Panc1 (cell line): ENCODE measurements at regions of chr7 and their contacts with region 1.

Region 1: DNA sequence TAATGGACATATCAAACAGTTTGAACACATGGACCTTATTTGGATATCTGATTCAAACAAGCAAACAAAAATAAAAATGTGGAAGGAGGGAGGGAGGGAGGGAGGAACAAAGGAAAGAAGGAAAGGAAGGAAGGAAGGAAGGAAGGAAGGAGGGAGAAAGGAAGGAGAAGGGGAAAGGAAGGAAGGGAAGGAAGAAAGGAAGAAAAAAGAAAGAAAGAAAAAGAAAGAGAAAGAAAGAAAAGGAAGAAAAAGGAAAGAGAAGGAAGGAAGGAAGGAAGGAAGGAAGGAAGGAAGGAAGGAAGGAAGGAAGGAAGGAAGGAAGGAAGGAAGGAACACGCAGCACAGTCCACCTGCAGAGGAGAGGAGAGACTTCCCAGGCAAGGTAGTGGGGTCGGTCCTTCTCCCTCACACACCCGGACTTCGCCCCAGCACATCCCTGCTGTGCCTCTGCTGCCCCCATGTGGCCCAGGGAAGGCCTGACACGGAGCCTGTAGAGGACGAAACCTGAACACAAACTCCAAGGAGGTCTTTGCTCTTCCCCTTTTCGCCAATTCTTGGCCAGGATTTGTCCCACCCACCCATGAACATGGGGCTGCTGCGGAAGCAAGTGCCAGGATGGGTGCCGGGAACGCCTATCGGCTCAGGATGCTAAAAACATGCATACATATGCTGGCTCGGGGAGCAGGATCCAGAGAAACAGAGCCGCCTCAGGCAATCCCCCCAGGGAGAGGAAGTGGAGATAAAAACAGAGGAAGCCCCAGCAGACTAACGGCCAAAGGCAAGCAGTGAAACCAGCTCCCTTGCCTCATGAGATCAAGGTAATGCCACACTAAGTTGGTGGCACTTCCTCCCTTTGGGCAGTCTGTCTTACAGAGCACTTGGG is 52.3 kb upstream of the DGKI start:
- DNase-seq: peak; percentile 59
- ATAC-seq: peak; percentile 98
- H3K4me3 ChIP-seq: peak overlapping the region in 1 of 2 experiments; percentile 15; a peak in 1 of 4 replicates
- H3K27ac ChIP-seq: no peak overlapping the region
- H3K4me1 ChIP-seq: peaks cover 5% of the 10 kb centered on the region; the same call in 1 of the 2 replicates
- H3K27me3 ChIP-seq: no peaks in the 10 kb centered on the region
- CTCF ChIP-seq: peak; percentile 95

Region 2: DNA sequence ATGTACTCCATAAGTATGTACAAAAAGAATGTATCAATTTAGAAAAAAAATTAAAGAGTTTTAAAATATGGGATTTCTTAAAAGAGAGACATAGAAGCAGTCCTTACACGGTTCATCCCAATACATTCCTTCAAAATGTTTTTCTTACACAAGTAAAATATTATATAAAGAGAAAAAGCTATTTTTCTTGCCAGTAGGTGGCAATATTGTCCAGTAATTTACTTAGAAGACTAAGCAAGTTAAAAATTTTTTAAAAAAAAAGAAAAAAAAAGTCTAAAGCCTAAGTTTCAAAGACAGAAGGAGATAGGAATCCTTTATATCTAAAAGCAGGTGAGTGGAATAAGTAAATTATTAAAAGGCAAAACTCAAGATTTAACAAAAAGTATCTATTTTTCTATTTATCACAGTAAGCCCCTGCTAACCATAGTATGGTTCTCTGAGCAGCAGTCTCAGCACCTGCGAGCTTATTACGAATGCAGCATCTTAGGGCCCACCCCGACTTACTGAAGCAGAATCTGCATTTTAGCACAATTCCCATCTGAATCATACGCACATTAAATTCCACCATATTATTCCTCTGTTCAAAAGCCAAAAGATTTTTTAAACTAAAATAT is 292.9 kb before region 1 on chr7:
- CTCF ChIA-PET with region 1: no interaction called
- POLR2A ChIA-PET with region 1: no interaction called
- in situ Hi-C with region 1: no loop called
- intact Hi-C with region 1: loop called (anchors 2 kb)
- DNase-seq: peak; percentile 41
- ATAC-seq: no peak
- H3K4me3 ChIP-seq: no peak overlapping the region
- H3K27ac ChIP-seq: no peak overlapping the region
- H3K4me1 ChIP-seq: no peaks in the 10 kb centered on the region
- H3K27me3 ChIP-seq: peaks cover 30% of the 10 kb centered on the region
- CTCF ChIP-seq: peak; percentile 36; the same call in 1 of the 2 replicates

Region 3: GRCh38 chr7:137656227-137656849 is 242.7 kb before region 1 on chr7:
- CTCF ChIA-PET with region 1: interaction called, 3 read pairs
- POLR2A ChIA-PET with region 1: interaction called, 4 read pairs
- in situ Hi-C with region 1: no loop called
- intact Hi-C with region 1: loop called (anchors 1 kb)
- DNase-seq: no peak
- ATAC-seq: peak; percentile 85
- H3K4me3 ChIP-seq: no peak overlapping the region
- H3K27ac ChIP-seq: no peak overlapping the region
- H3K4me1 ChIP-seq: no peaks in the 10 kb centered on the region
- H3K27me3 ChIP-seq: peaks cover 12% of the 10 kb centered on the region
- CTCF ChIP-seq: peak; percentile 91

Region 4: DNA sequence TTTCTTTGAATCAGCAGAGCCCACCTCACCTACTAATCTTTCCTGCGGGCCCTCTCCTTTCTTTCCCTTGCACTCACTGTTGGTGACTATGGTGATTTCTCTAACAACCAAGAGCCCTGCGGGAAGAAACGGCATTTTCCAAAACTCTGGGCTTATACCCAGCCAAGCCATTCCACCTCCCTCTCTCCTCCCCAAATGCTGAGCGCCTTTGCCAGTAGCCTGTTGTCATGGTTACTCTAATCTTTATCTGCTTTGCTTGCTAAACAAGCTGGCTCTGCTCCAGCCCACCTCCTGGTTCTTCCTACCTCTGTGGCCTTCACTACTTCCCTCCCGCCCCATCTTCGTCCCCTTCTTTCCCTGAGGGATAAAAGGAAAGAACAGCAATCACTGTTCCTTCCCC is 139.0 kb before region 1 on chr7:
- CTCF ChIA-PET with region 1: interaction called, 16 read pairs
- POLR2A ChIA-PET with region 1: no interaction called
- in situ Hi-C with region 1: no loop called
- intact Hi-C with region 1: no loop called
- DNase-seq: no peak
- ATAC-seq: no peak
- H3K4me3 ChIP-seq: no peak overlapping the region
- H3K27ac ChIP-seq: no peak overlapping the region
- H3K4me1 ChIP-seq: no peaks in the 10 kb centered on the region
- H3K27me3 ChIP-seq: 0 out of 2 replicates have a peak, but pooled peaks cover 2% of the 10 kb centered on the region
- CTCF ChIP-seq: no peak

Region 5: DNA sequence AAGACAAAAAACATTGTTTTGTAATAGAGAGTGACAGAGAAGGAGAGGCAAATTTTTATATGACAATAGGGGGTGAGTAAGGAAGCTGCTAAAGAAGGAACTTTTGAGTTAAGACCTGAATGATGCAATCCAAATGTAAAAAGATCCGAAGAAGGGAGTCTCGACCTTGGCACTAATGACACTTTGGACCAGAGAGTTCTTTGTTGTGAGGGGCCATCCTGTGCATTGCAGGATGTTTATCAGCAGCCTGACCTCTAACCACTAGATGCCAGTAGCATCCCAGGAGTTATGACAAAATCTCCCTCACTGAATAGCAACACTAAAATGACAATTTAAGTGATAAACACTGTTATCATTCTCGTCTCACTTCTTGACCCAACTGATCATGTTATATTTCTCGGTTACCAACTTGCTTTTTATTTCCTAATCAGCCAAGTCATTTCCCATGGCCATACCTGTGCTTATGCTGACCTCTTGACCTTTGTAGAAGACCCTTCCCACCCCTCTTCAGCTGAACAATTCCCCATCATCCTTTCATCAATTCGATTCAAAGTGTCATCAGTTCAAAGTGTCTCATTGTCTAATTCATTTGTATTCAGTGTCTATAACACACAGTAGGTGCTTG is 82.3 kb before region 1 on chr7:
- CTCF ChIA-PET with region 1: no interaction called
- POLR2A ChIA-PET with region 1: no interaction called
- in situ Hi-C with region 1: no loop called
- intact Hi-C with region 1: no loop called
- DNase-seq: no peak
- ATAC-seq: no peak
- H3K4me3 ChIP-seq: no peak overlapping the region
- H3K27ac ChIP-seq: no peak overlapping the region
- H3K4me1 ChIP-seq: no peaks in the 10 kb centered on the region
- H3K27me3 ChIP-seq: peaks cover 3% of the 10 kb centered on the region
- CTCF ChIP-seq: no peak; the same call in 1 of the 2 replicates

Region 6: DNA sequence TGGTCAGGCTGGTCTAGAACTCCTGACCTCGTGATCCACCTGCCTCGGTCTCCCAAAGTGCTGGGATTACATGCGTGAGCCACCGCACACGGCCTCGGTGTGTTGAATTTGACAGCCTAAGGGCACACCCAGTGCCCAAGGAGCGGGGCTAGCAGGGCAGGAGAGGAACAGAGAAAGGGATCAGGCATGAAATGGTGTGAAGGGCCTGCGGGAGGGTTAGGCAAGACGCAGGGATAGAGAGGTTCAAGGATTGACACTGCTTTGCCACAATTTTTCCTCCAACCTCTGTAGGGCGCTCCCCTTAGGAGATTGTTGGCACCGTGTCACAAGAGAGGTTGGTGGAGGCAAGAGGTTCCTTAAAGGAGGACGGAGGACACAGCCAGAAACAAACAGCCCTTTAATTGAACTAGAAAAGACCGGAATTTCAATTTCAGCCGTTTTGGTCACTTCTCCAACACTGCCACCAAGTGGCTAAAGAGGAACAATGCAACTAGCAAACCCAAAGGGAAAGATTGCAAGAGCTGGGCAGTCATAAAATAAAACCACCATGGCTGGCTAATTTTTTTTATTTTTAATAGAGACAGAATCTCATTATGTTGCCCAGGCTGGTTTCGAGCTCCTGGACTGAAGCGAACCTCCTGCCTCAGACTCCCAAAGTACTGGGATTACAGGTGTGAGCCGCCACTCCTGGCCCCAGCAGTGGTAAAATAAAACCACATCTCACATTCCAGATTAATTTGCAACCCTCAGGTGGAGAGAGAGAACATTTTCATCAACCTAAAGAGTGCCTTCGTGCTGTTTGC is 109.7 kb after region 1 on chr7:
- CTCF ChIA-PET with region 1: interaction called, 6 read pairs
- POLR2A ChIA-PET with region 1: no interaction called
- in situ Hi-C with region 1: no loop called
- intact Hi-C with region 1: loop called (anchors 1 kb)
- DNase-seq: peak; percentile 68
- ATAC-seq: peak; percentile 77
- H3K4me3 ChIP-seq: peak overlapping the region in 1 of 2 experiments; percentile 21; a peak in 1 of 4 replicates
- H3K27ac ChIP-seq: no peak overlapping the region
- H3K4me1 ChIP-seq: no peaks in the 10 kb centered on the region
- H3K27me3 ChIP-seq: no peaks in the 10 kb centered on the region
- CTCF ChIP-seq: peak; percentile 87